ENCODE measurements at regions of chr9 and their contacts with region 1.

Region 1: GRCh38 chr9:131999692-132000551 is 79.7 kb downstream of the MED27 start:
- DNase-seq: no peak
- H3K4me3 Mint-ChIP-seq: no peak overlapping the region
- H3K27ac Mint-ChIP-seq: no peak overlapping the region
- H3K4me1 Mint-ChIP-seq: peaks cover 30% of the 10 kb centered on the region
- H3K27me3 Mint-ChIP-seq: no peaks in the 10 kb centered on the region

Region 2: GRCh38 chr9:131927091-131927490 is 72.8 kb before region 1 on chr9:
- CTCF ChIA-PET with region 1: no interaction called
- POLR2A ChIA-PET with region 1: no interaction called
- DNase-seq: no peak
- H3K4me3 Mint-ChIP-seq: no peak overlapping the region
- H3K27ac Mint-ChIP-seq: no peak overlapping the region
- H3K4me1 Mint-ChIP-seq: peaks cover 6% of the 10 kb centered on the region
- H3K27me3 Mint-ChIP-seq: no peaks in the 10 kb centered on the region

Region 3: GRCh38 chr9:132094314-132094791 is 94.4 kb after region 1 on chr9:
- CTCF ChIA-PET with region 1: no interaction called
- POLR2A ChIA-PET with region 1: interaction called, 11 read pairs
- DNase-seq: no peak
- H3K4me3 Mint-ChIP-seq: no peak overlapping the region
- H3K27ac Mint-ChIP-seq: no peak overlapping the region
- H3K4me1 Mint-ChIP-seq: no peaks in the 10 kb centered on the region
- H3K27me3 Mint-ChIP-seq: peaks cover 30% of the 10 kb centered on the region